ENCODE measurements at regions of chr15 and their contacts with region 1.

Region 1: GRCh38 chr15:89863918-89864317 is 29.9 kb downstream of the AP3S2 start:
- DNase-seq: no peak
- H3K4me3 ChIP-seq: no peak overlapping the region
- CTCF ChIP-seq: no peak

Region 2: DNA sequence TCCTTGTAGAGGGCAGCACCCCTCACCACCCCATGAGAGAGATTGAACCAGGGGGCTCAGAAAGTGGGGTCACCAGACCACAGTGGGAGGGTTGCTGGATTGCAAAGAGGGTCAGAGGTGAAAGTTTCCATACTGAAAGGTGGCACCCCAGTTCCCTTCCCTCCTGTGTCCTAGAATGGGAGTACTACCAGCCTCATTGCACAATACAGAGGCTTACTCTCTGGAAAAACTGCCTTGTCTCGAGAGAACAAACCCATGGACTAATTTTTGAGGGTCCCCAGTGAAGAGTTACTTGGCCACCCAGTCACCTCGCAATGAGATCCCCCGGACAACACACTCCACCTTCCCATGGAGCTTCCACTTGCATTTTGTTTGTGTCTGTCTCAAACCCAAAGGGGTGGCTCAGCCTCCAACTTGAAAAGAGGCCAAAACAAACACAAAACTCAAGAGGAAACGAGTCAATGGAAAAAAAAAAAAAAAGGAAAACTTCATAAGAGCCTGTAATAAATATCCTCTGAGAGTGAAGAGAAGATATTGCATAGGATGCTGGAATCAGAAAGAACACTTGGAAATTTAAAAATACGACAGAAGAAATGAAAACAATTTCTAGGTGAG is 69.2 kb before region 1 on chr15:
- in situ Hi-C with region 1: loop called (anchors 5 kb)
- DNase-seq: peak; percentile 54
- H3K4me3 ChIP-seq: no peak overlapping the region
- CTCF ChIP-seq: no peak

Measured in astrocyte of the cerebellum (primary cell).